Activated CD4-positive, alpha-beta T cell treated with anti-CD3 and anti-CD28 coated beads, Interleukin-2, amount 10 ng/mL, durations not matched to agents 7 days and 5 days (primary cell): ENCODE measurements at regions of chr16 and their contacts with region 1.

Region 1: GRCh38 chr16:29770250-29770929 is 7.7 kb upstream of the ZG16 start:
- DNase-seq: no peak
- H3K4me3 Mint-ChIP-seq: no peak overlapping the region
- H3K27ac Mint-ChIP-seq: no peak overlapping the region
- H3K4me1 Mint-ChIP-seq: peaks cover 12% of the 10 kb centered on the region
- H3K27me3 Mint-ChIP-seq: peaks cover 2% of the 10 kb centered on the region

Region 2: GRCh38 chr16:29736764-29737163 is 33.6 kb before region 1 on chr16:
- CTCF ChIA-PET with region 1: no interaction called
- POLR2A ChIA-PET with region 1: no interaction called
- DNase-seq: no peak
- H3K4me3 Mint-ChIP-seq: no peak overlapping the region
- H3K27ac Mint-ChIP-seq: no peak overlapping the region
- H3K4me1 Mint-ChIP-seq: peaks cover 70% of the 10 kb centered on the region
- H3K27me3 Mint-ChIP-seq: no peaks in the 10 kb centered on the region

Region 3: GRCh38 chr16:29784901-29785500 is 14.6 kb after region 1 on chr16:
- CTCF ChIA-PET with region 1: interaction called, 10 read pairs
- POLR2A ChIA-PET with region 1: no interaction called
- DNase-seq: peak; percentile 71
- H3K4me3 Mint-ChIP-seq: no peak overlapping the region
- H3K27ac Mint-ChIP-seq: peak overlapping the region; percentile 80
- H3K4me1 Mint-ChIP-seq: peaks cover 33% of the 10 kb centered on the region
- H3K27me3 Mint-ChIP-seq: peaks cover 5% of the 10 kb centered on the region